ENCODE measurements at regions of chr19 and their contacts with region 1.

Region 1: DNA sequence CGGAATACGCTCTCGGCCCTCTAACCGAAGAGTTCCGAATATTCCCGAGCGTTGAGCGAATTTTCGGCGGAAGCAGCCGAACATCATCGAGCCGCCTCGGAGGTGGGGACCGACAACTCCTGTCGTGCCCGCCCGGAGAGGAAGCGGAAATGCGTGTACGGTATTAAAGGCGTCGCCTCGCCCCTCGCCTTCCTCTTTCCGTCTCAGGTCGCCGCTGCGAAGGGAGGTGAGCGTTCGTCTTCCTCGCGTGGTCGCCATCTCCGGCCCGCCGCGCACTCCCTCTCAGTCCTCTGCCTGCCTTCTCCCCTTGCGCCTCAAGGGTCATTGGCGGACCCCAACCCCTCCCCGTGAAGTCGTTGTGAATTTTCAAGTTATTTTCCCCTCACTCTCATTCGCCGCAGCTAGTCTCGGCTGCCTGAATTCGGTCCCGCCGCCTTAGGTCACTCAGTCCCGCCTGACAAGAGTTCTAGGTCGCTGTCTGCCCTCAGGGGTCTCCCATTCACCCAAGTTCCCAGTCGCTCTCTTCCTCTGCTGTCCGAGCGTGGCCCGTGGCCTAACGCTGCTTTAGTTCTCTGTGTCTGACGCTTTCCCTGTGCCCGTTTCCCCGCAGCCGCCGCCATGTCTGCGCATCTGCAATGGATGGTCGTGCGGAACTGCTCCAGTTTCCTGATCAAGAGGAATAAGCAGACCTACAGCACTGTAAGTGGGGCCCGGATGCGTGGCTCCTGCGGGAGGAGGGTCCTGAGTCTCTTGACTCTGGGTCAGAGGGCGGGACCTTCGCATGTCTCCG is at the start of gene RPL28:
- DNase-seq: peak; percentile 99
- H3K4me3 ChIP-seq: peak within 1 kb of the TSS; percentile 74 to 93 (median 86)
- H3K27ac ChIP-seq: peak within 1 kb of the TSS; percentile 94 to 99 (median 96)
- H3K4me1 ChIP-seq: peaks cover 33 to 54% (median 44%) of the 10 kb centered on the region in 4 donors
- H3K27me3 ChIP-seq: no peaks in the 10 kb centered on the region
- CTCF ChIP-seq: peak in 1 of 5 experiments; percentile 13
- EP300 ChIP-seq: no peak
- POLR2A ChIP-seq: peak; percentile 100
- total RNA-seq, gene RPL28: 448 to 648 (median 605) TPM

Region 2: GRCh38 chr19:55116232-55116858 is 269.6 kb before region 1 on chr19:
- in situ Hi-C with region 1: no loop called
- intact Hi-C with region 1: no loop called
- DNase-seq: peak; percentile 69
- H3K4me3 ChIP-seq: peak overlapping the region; percentile 69 to 95 (median 80)
- H3K27ac ChIP-seq: peak overlapping the region; percentile 92 to 96 (median 95)
- H3K4me1 ChIP-seq: peaks cover 30 to 50% (median 45%) of the 10 kb centered on the region in 4 donors
- H3K27me3 ChIP-seq: no peaks in the 10 kb centered on the region
- CTCF ChIP-seq: no peak
- EP300 ChIP-seq: no peak
- POLR2A ChIP-seq: peak; percentile 54

Region 3: GRCh38 chr19:55279770-55280643 is 105.9 kb before region 1 on chr19 and contains the start of gene HSPBP1:
- in situ Hi-C with region 1: loop called in 1 of 4 experiments (anchors 25 kb)
- intact Hi-C with region 1: no loop called
- DNase-seq: peak; percentile 98
- H3K4me3 ChIP-seq: peak within 1 kb of the TSS; percentile 58 to 80 (median 63)
- H3K27ac ChIP-seq: peak within 1 kb of the TSS; percentile 79 to 87 (median 84)
- H3K4me1 ChIP-seq: peaks cover 12 to 39% (median 16%) of the 10 kb centered on the region in 4 donors
- H3K27me3 ChIP-seq: peaks cover 18% of the 10 kb centered on the region
- CTCF ChIP-seq: no peak
- EP300 ChIP-seq: no peak
- POLR2A ChIP-seq: peak; percentile 38
- total RNA-seq, gene HSPBP1: 4.5 to 98.7 (median 27.0) TPM

Region 4: DNA sequence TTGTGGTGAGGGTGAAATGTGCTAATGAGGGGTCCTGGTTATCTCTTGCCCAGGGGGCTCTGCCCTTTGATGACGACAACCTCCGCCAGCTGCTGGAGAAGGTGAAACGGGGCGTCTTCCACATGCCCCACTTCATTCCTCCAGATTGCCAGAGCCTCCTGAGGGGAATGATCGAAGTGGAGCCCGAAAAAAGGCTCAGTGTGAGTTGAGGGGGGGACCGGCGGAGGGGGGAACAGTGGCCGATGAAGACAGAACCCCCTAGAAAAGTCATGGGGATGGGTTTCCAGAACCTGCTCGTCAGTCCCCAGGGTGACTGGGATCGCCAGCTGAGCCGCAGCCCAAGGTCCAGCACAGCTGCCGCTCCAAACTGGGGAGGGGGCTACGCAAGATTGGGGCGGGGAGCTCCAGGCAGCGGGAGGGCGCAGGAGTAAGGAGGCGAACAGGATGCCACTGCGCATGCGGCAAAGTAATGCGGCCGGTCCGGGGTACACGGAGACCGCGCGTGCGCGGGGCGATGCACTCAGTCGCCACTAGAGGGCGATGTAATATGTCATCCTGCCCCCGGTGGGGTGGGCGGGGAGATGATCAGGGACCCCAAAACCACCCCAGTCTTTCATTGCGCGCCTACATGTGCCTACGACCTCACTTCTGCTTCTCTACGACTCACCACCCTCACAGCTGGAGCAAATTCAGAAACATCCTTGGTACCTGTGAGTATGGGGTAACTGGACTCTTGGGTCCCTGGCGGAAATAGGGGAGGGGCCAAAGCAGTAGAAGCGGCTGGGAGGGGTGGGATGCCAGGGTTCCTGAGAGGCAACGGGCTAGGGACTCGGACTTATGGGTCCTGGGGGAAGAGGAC is 84.2 kb before region 1 on chr19:
- in situ Hi-C with region 1: loop called in 1 of 4 experiments (anchors 25 kb)
- intact Hi-C with region 1: loop called (anchors 5 kb)
- DNase-seq: peak; percentile 93
- H3K4me3 ChIP-seq: peak overlapping the region in 3 of 4 donors; percentile 8 to 41 (median 24)
- H3K27ac ChIP-seq: peak overlapping the region in 1 of 4 donors; percentile 9
- H3K4me1 ChIP-seq: peaks cover 4 to 10% (median 9%) of the 10 kb centered on the region in 4 donors
- H3K27me3 ChIP-seq: no peaks in the 10 kb centered on the region
- CTCF ChIP-seq: peak; percentile 95 to 99 (median 98)
- EP300 ChIP-seq: no peak
- POLR2A ChIP-seq: no peak

Region 5: DNA sequence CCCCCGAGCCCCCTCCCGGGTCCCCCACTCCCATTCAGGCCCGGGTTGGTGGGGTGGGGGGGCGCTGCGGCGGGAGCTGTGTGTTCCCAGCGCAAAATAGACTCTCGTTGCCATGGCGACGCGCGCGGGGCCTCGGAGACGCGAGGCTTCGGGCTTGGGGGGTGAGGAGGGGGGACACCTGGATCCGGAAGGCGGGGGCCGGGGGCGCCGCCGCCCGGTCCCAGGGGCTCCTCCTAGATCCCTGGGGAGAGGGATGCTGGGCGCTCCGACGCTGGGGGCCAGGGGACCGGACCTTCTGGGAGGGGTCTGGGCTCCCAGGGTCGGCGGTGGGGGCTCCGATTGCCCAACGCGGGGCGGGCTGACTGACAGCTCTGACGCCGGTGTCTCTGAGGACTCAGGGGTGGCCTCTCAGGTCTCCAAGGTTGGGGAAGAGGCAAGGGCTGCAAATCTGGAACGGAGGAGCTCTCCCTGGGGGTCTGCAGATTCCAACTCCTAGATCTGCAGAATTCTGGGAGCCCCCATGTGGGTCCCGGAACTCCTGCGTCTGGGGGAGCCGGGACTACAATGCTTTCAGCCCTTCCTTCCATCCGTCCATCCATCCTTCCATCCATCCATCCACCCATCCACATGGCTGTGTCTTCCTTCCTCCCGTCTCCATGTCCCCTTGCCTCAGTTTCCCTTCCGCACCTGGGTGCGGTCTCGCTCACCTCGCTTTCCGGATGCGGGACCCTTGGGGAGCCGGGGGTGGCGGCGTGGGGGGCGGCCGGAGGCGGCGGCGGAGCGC is 66.2 kb after region 1 on chr19:
- in situ Hi-C with region 1: no loop called
- intact Hi-C with region 1: loop called (anchors 1 kb)
- DNase-seq: no peak
- H3K4me3 ChIP-seq: peak overlapping the region in 2 of 4 donors; percentile 3 to 32
- H3K27ac ChIP-seq: no peak overlapping the region
- H3K4me1 ChIP-seq: peaks cover 6 to 20% (median 16%) of the 10 kb centered on the region in 4 donors
- H3K27me3 ChIP-seq: peaks cover 34% of the 10 kb centered on the region
- CTCF ChIP-seq: no peak
- EP300 ChIP-seq: no peak
- POLR2A ChIP-seq: no peak

Region 6: DNA sequence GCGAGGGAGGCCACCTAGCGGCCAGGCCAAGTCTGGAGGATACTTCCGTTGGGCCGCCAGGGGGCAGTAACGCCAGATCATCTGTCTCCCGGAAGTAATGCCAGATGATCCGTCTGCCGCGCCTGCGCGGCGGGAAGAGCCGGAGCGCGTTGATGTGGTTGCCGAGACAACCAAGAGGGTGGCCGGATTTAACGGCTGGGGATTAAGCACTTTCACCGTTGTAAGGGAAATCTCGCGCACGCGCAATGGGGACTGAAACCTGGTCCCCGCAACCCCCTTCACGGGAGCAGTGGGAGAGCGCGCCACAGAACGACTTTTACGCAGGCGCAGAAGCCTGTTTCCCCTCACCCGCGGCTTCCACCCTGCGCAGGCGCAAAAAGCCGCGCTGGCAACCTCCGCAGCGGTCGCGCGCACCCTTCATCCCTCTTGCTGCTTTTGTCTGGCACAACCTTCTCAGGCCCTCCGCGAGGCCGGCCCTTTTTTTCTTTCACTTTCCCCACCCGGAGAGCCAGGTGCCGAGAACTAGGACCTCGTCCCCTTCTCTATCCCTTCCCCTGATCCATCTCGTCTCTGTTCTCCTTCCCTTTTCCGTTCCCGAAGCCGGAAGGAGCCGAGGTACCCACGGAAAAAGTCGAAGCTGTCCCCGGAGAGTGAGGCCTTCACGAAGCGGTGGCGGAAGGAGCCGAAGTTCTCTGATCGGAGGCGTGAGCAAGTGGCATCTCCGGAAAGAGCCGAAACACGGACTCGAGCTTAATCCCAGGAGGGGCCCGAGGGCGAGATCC is 268.0 kb after region 1 on chr19:
- in situ Hi-C with region 1: no loop called
- intact Hi-C with region 1: loop called (anchors 10 kb)
- DNase-seq: peak; percentile 99
- H3K4me3 ChIP-seq: peak overlapping the region; percentile 64 to 93 (median 79)
- H3K27ac ChIP-seq: peak overlapping the region; percentile 93 to 100 (median 99)
- H3K4me1 ChIP-seq: peaks cover 34 to 49% (median 41%) of the 10 kb centered on the region in 4 donors
- H3K27me3 ChIP-seq: no peaks in the 10 kb centered on the region
- CTCF ChIP-seq: peak; percentile 97 to 100 (median 99)
- EP300 ChIP-seq: no peak
- POLR2A ChIP-seq: peak; percentile 92

Measured in transverse colon (tissue), 4 donors.